RWPE1 (cell line): ENCODE measurements at regions of chr19 and their contacts with region 1.

Region 1: GRCh38 chr19:13401388-13401787 is 104.9 kb downstream of the CACNA1A start:
- DNase-seq: peak; percentile 42
- H3K27ac ChIP-seq: no peak overlapping the region
- CTCF ChIP-seq: no peak

Region 2: DNA sequence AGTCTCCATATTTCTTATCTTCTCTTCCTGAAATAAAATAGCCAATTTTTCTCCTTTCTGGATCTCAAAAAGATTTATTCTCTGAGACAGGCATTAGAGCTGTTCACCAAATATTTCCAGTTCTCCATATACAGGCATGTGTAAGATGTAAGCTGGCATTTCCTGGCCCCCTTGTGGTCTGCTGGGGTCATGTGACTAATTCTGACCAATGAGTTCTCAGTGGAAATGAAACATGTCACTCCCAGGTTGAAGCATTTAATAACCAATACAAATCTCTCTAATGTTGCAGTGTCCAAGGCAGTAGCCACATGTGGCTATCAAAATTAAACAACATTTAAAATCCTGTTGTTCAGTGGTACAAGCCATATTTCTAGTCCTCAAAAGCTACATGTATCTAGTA is 119.7 kb after region 1 on chr19:
- CTCF ChIA-PET with region 1: no interaction called
- POLR2A ChIA-PET with region 1: no interaction called
- DNase-seq: no peak
- H3K27ac ChIP-seq: no peak overlapping the region
- CTCF ChIP-seq: no peak

Region 3: DNA sequence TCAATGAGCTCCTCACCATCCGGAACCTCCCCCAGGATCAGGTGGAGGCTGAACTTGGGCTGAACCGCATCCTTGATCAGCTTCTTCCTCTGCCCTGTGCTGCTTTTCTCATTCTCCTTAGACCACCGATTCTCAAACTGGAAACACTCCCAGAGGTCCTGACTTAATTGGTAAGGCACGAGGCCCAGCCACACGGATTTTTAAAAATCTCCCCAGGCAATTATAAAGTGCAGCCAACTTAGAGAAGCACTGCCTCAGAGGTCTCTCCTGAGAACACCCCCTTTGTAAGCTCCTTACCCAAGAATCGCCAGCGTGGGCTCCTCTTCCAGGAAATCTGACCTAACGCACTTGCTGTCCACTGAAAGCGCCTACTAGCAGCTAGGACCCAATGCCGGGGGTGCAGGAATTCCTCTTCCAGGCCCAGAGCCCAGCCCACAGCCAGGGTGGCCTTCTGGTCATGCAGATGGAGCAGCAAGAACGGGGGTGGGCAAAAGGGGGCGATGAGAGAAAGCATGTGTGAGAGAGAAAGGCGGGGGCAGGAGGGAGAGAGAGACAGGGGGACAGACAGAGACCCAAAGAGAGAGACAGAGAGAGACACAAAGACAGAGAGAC is 171.8 kb after region 1 on chr19:
- CTCF ChIA-PET with region 1: interaction called, 10 read pairs
- POLR2A ChIA-PET with region 1: no interaction called
- DNase-seq: no peak
- H3K27ac ChIP-seq: no peak overlapping the region
- CTCF ChIP-seq: no peak